Ascending aorta (tissue), 2 donors: ENCODE measurements at regions of chr4 and their contacts with region 1.

Region 1: DNA sequence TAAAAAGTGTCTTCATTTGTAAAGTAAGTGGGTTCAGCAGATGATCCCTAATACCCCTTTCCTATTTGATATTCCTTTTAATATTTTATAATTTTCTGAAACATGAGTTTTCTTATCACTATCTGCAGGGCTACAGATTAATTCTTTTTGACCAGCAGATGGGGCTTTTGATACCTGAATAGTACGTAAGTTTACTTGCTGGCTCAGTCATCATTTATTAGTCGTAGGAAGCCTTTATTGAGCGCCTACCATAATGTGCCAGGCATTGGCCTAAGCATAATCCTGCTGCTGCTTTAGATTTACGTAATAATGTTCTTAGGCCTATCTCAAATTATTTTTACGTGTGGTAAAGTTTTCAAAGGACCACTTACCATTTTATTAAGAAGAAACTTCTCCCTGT is 33.1 kb downstream of the OSTC start:
- DNase-seq: no peak
- H3K4me3 ChIP-seq: no peak overlapping the region
- H3K27ac ChIP-seq: no peak overlapping the region
- H3K4me1 ChIP-seq: no peaks in the 10 kb centered on the region
- H3K27me3 ChIP-seq: no peaks in the 10 kb centered on the region
- CTCF ChIP-seq: peak in 1 of 3 experiments; percentile 35

Region 2: GRCh38 chr4:109406338-109406931 is 723.0 kb after region 1 on chr4:
- intact Hi-C with region 1: loop called (anchors 5 kb)
- DNase-seq: no peak
- H3K4me3 ChIP-seq: no peak overlapping the region
- H3K27ac ChIP-seq: no peak overlapping the region
- H3K4me1 ChIP-seq: no peaks in the 10 kb centered on the region
- H3K27me3 ChIP-seq: no peaks in the 10 kb centered on the region
- CTCF ChIP-seq: peak; percentile 51 to 63 (median 61)